CD4-positive, alpha-beta memory T cell (primary cell): ENCODE measurements at regions of chr19 and their contacts with region 1.

Region 1: DNA sequence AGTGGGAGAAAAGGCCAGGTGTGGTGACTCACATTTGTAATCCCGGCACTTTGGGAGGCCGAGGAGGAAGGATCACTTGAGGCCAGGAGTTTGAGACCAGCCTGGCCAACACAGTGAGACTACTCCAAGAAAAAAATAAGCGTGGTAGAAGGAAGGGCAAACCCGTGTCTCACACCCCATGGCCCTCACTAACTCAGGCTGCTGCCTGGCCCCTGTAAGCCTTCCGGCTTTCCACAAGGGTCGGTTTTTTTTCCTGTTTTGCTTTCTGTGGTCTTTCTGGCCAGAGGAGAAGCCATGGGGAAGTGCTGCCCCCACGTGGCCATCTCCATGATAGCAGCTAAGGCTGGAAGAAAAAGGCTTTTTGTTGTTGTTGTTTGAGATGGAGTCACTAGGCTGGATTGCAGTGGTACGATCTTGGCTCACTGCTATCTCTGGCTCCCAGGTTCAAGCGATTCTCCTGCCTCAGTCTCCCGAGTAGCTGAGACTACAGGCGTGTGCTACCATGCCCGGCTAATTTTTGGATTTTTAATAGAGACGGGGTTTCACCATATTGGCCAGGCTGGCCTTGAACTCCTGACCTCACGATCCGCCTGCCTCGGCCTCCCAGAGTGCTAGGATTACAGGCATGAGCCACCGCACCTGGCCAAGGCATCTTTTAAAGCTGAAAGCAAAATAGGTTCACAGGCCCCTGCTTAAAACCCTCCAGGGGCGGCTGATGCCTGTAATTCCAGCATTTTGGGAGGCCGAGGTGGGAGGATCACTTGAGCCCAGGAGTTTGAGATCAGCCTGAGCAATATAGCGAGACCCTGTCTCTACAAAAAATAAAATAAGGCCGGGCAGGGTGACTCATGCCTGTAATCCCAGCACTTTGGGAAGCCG is 7.5 kb upstream of the ARHGEF18 start:
- DNase-seq: peak; percentile 70 to 81 (median 79)
- H3K4me3 ChIP-seq: no peak overlapping the region
- H3K4me3 Mint-ChIP-seq: peak overlapping the region in 6 of 8 donors; percentile 17 to 72 (median 66)
- H3K27ac ChIP-seq: no peak overlapping the region
- H3K27ac Mint-ChIP-seq: peak overlapping the region; percentile 54 to 92 (median 85)
- H3K4me1 ChIP-seq: peaks cover 67% of the 10 kb centered on the region
- H3K4me1 Mint-ChIP-seq: peaks cover 44 to 65% (median 50%) of the 10 kb centered on the region in 4 donors
- H3K27me3 ChIP-seq: no peaks in the 10 kb centered on the region
- H3K27me3 Mint-ChIP-seq: no peaks in the 10 kb centered on the region

Region 2: GRCh38 chr19:7326105-7326877 is 14.9 kb before region 1 on chr19:
- CTCF ChIA-PET with region 1: interaction called, 50 read pairs
- POLR2A ChIA-PET with region 1: interaction called, 10 read pairs
- intact Hi-C with region 1: no loop called
- DNase-seq: peak in 2 of 5 donors; percentile 24 to 37
- H3K4me3 ChIP-seq: no peak overlapping the region
- H3K4me3 Mint-ChIP-seq: no peak overlapping the region
- H3K27ac ChIP-seq: no peak overlapping the region
- H3K27ac Mint-ChIP-seq: no peak overlapping the region
- H3K4me1 ChIP-seq: no peaks in the 10 kb centered on the region
- H3K4me1 Mint-ChIP-seq: no peaks in the 10 kb centered on the region
- H3K27me3 ChIP-seq: no peaks in the 10 kb centered on the region
- H3K27me3 Mint-ChIP-seq: peaks cover 1 to 2% of the 10 kb centered on the region in 2 donors

Region 3: DNA sequence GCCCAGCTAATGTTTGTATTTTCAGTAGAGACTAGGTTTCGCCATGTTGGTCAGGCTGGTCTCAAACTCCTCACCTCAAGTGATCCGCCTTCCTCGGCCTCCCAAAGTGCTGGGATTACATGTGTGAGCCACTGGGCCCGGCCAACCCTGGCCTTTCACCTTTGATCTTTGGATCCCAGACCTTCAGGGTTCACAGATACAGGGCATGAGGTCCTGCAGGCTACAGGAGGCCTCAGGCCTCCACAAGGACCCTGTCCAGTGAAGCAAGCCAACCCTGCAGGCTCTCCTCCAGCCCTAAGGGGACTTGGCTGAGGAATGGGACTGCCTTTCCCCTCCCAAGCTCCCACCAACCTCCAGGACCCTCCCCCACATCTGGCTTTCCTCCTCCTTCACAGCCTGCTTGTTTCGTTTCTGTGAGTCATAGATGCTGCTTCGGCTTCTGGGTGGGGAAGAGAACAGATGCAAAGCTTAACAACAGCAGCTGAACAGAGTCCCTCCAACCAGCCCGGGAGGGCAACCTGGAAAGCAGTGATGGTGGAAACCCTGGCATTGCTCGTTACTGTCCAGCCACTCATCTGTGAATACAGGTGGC is 19.3 kb after region 1 on chr19:
- CTCF ChIA-PET with region 1: interaction called, 123 read pairs
- POLR2A ChIA-PET with region 1: interaction called, 50 read pairs
- intact Hi-C with region 1: no loop called
- DNase-seq: no peak
- H3K4me3 ChIP-seq: no peak overlapping the region
- H3K4me3 Mint-ChIP-seq: no peak overlapping the region
- H3K27ac ChIP-seq: no peak overlapping the region
- H3K27ac Mint-ChIP-seq: peak overlapping the region in 5 of 7 donors; percentile 17 to 73 (median 52)
- H3K4me1 ChIP-seq: peaks cover 56% of the 10 kb centered on the region
- H3K4me1 Mint-ChIP-seq: peaks cover 44 to 87% (median 53%) of the 10 kb centered on the region in 4 donors
- H3K27me3 ChIP-seq: no peaks in the 10 kb centered on the region
- H3K27me3 Mint-ChIP-seq: no peaks in the 10 kb centered on the region

Region 4: GRCh38 chr19:7504684-7505083 is 163.5 kb after region 1 on chr19:
- CTCF ChIA-PET with region 1: no interaction called
- POLR2A ChIA-PET with region 1: no interaction called
- intact Hi-C with region 1: no loop called
- DNase-seq: no peak
- H3K4me3 ChIP-seq: no peak overlapping the region
- H3K4me3 Mint-ChIP-seq: no peak overlapping the region
- H3K27ac ChIP-seq: no peak overlapping the region
- H3K27ac Mint-ChIP-seq: no peak overlapping the region
- H3K4me1 ChIP-seq: peaks cover 10% of the 10 kb centered on the region
- H3K4me1 Mint-ChIP-seq: peaks cover 5 to 9% (median 7%) of the 10 kb centered on the region in 4 donors
- H3K27me3 ChIP-seq: no peaks in the 10 kb centered on the region
- H3K27me3 Mint-ChIP-seq: peaks cover 22 to 38% of the 10 kb centered on the region in 2 donors